Transverse colon (tissue), 4 donors: ENCODE measurements at regions of chr4 and their contacts with region 1.

Region 1: DNA sequence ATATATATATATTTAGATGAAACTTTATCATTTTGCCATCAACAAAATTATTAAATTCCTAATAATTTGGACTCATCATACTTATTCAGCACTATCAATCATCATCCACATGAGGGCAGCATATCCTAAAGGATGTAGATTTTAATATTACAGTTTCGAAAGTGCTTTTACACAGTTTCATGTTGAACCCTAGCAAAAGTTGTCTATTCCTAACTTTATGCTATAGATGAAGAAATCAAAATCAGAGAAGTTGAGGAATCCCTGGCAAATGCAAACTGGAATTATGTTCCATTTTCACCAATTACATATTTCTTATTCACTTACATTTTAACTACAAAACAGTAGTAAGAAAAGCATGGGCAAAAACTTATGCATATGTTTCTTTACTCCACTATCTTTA is 36.6 kb upstream of the UGT2A1 start:
- DNase-seq: no peak
- H3K4me3 ChIP-seq: no peak overlapping the region
- H3K27ac ChIP-seq: no peak overlapping the region
- H3K4me1 ChIP-seq: peaks cover 0 to 6% (median 2%) of the 10 kb centered on the region in 4 donors
- H3K27me3 ChIP-seq: no peaks in the 10 kb centered on the region
- CTCF ChIP-seq: peak; percentile 50 to 62 (median 57)
- EP300 ChIP-seq: no peak
- POLR2A ChIP-seq: no peak

Region 2: GRCh38 chr4:69823481-69824186 is 134.0 kb after region 1 on chr4:
- in situ Hi-C with region 1: loop called in 2 of 4 experiments (anchors 5 to 25 kb)
- intact Hi-C with region 1: no loop called
- DNase-seq: peak; percentile 83
- H3K4me3 ChIP-seq: no peak overlapping the region
- H3K27ac ChIP-seq: peak overlapping the region; percentile 55 to 72 (median 62)
- H3K4me1 ChIP-seq: peaks cover 4 to 19% (median 11%) of the 10 kb centered on the region in 4 donors
- H3K27me3 ChIP-seq: no peaks in the 10 kb centered on the region
- CTCF ChIP-seq: peak; percentile 42 to 81 (median 55)
- EP300 ChIP-seq: no peak
- POLR2A ChIP-seq: no peak

Region 3: DNA sequence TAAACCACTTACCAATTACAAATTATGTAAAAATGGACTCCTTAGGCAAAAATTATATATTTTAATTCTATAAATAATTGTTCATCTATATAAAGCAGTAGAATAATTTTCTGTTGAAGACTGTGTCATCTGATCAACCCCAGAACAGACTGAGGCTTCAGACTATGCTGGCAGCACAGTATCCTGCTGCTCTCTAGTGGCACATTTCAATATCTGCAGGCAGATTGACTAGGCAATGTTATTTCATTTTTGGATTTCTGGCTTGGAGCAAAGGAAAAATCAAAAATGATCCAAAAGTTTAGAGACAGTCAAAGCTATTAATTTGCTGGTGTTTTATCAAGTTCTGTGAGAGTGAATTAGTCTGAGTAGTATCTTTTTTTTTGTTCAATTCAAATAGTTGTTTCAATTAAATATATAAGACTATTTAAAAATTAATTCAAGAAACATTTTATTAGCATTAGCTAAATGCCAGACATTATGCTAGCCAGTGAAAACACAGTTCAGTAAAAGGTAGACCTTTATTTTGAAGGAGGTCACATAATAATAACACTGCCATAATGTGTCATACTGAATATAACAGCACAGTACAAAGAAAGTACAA is 191.7 kb after region 1 on chr4:
- in situ Hi-C with region 1: loop called (anchors 10 to 25 kb)
- intact Hi-C with region 1: no loop called
- DNase-seq: peak; percentile 17
- H3K4me3 ChIP-seq: no peak overlapping the region
- H3K27ac ChIP-seq: no peak overlapping the region
- H3K4me1 ChIP-seq: peaks cover 0 to 23% (median 7%) of the 10 kb centered on the region in 4 donors
- H3K27me3 ChIP-seq: no peaks in the 10 kb centered on the region
- CTCF ChIP-seq: peak; percentile 60 to 85 (median 79)
- EP300 ChIP-seq: no peak
- POLR2A ChIP-seq: no peak

Region 4: DNA sequence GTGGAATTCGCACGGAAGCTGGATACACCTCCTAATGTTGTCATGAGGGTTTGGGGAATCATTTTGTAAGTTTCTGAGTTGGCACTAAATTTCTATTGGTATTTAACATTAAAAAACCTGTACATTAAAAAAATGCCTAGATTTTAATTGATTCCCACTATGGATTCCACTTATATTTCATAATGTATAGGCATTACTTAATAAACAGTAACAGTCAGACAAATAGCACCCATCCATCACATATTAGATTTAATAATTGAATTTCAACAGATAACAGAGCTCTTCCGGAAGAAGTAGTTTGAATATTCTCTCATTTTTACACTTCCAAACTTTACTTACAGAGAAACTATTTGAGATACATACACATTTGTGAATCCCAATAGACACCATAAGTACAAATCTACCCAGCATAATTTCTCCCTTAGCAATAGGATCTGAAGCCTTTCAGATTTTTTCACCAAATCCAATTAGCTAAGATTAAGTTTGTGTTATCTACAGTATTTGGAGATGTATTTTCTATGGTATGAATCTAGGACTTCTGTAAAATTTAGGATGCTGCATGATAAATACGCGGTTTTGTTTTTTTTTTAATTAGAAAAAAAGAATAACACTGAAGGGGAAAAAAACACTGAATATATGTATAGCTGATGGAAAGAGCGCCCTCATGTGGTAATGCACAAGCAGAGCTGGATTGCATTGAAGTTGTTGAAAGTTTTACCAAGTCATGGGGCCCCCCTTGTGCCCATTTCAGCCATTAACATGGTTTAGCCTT is 493.8 kb after region 1 on chr4:
- in situ Hi-C with region 1: loop called in 2 of 4 experiments (anchors 25 kb)
- intact Hi-C with region 1: no loop called
- DNase-seq: peak; percentile 7
- H3K4me3 ChIP-seq: no peak overlapping the region
- H3K27ac ChIP-seq: no peak overlapping the region
- H3K4me1 ChIP-seq: no peaks in the 10 kb centered on the region
- H3K27me3 ChIP-seq: no peaks in the 10 kb centered on the region
- CTCF ChIP-seq: peak; percentile 47 to 60 (median 57)
- EP300 ChIP-seq: no peak
- POLR2A ChIP-seq: no peak

Region 5: DNA sequence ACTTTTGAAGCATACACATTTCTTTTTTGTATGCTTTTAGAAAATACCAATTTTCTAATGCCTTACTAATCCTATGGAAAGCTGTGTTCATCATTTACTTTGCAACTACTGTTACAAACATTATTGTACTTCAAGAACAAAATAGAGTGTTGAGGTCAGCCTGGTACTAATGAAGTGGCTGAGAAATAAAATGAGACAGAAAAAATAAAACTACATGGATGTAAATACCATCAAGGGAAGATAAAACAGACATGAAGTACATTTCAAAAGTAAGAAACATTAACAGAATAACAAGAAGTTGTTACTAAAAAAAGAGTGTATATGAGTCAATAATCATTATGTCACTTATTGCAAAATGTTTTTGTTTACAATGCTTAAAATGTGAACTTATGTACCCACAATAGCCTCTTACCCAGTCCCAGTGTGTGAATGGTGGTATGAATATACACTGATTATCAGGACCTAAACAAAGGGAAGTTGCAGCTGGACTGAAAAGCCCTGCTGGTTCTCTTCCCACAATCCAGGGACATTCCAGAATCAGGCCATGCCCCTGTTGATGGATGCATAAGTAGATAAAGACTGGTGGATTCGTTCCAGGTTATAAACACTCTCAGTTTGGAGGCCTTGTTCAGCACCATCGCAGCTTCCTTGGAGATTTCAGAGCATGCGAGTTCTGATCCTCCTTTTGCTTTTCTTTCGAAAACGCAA is 550.4 kb after region 1 on chr4:
- in situ Hi-C with region 1: no loop called
- intact Hi-C with region 1: no loop called
- DNase-seq: no peak
- H3K4me3 ChIP-seq: no peak overlapping the region
- H3K27ac ChIP-seq: no peak overlapping the region
- H3K4me1 ChIP-seq: no peaks in the 10 kb centered on the region
- H3K27me3 ChIP-seq: no peaks in the 10 kb centered on the region
- CTCF ChIP-seq: no peak
- EP300 ChIP-seq: no peak
- POLR2A ChIP-seq: no peak

Region 6: DNA sequence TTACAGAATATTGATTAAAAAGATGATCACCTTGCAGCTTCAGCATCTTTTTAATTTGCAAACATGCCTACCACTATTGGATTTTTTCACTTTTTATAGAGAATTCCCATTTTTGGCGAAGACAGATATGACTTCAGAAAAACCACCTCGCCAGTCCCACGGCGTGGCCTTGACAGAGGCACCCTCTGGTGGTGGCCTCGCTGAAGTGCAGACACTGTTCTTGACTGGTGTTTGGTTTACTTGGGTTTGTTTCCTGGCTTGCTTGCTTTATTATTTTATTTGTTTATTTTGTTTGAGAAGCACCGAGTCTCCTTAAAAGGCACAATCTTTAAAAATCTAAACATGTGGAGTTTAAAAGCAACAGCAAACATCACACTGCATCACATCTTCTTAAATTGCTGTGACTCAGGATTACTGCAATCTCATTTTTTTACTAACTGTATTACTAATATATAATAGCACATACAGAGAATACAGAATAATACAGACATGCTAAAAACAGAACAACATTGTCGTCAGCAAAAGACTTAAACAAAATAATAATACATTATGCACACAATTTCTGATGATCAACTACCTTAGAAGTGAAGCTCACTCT is 815.7 kb after region 1 on chr4:
- in situ Hi-C with region 1: loop called in 2 of 4 experiments (anchors 25 kb)
- intact Hi-C with region 1: no loop called
- DNase-seq: peak; percentile 55
- H3K4me3 ChIP-seq: no peak overlapping the region
- H3K27ac ChIP-seq: no peak overlapping the region
- H3K4me1 ChIP-seq: peaks cover 0 to 4% (median 0%) of the 10 kb centered on the region in 4 donors
- H3K27me3 ChIP-seq: peaks cover 8% of the 10 kb centered on the region
- CTCF ChIP-seq: peak; percentile 70 to 87 (median 76)
- EP300 ChIP-seq: no peak
- POLR2A ChIP-seq: no peak